Activated naive CD8-positive, alpha-beta T cell treated with anti-CD3 and anti-CD28 coated beads, Interleukin-2, amount 10 ng/mL, durations not matched to agents 7 days and 5 days (primary cell): ENCODE measurements at regions of chr18 and their contacts with region 1.

Region 1: DNA sequence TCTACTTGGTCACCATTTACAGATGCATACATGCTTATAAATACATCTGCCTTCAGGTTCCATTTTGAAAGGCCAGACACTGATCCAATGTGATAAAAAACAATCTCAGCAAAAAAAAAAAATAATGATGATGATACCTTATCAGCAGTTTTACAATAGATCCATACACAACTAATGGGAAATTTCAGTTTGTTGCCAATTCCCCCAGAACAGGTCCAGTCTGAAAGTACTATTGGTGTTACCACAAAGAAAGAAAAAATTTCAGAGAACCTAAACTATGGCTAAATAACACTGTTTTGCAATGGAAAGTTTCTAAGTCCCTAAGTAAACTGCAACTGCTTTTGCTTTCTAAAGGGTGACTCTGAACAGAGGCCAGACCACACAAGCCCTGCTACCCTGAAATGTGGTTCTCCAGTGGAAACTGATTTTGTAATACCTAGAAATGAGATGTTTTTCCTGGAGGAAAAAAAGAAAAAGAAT is 54.1 kb downstream of the LPIN2 start:
- DNase-seq: no peak
- ATAC-seq: peak; percentile 43
- H3K4me3 Mint-ChIP-seq: peak overlapping the region; percentile 83
- H3K27ac Mint-ChIP-seq: peak overlapping the region; percentile 99
- H3K4me1 Mint-ChIP-seq: peaks cover 76% of the 10 kb centered on the region
- H3K27me3 Mint-ChIP-seq: no peaks in the 10 kb centered on the region

Region 2: DNA sequence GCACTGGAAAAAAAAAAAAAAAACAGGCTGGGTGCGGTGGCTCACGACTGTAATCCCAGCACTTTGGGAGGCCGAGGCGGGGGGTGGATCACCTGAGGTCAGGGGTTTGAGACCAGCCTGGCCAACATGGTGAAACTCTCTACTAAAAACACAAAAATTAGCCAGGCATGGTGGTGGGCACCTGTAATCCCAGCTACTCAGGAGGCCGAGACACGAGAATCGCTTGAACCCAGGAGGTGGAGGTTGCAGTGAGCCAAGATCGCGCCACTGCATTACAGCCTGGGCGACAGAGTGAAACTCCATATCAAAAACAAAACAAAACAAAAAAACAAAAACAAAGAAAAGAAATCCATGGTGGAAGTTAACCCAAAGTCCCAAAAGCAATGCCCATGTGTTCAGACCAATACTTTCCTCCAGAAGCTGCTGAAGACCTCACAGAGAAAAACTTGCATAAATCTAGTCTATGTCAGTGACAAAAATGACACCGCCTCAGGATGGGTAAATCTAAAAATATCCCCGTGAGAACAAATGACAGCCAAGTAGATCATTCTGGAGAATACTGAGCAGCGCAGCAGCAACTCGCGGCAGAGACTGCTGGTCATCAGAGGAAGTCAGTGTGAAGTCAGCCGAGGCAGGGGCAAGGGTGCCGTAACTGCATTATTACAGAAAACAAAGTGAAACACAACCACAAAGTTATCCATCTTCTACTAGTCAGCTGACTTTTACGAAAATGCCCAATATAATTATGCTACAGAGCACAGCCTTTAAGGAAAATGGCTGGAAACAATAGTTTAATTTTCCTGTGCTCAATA is 13.1 kb after region 1 on chr18:
- POLR2A ChIA-PET with region 1: interaction called, 104 read pairs
- DNase-seq: peak; percentile 59
- ATAC-seq: peak; percentile 80
- H3K4me3 Mint-ChIP-seq: peak overlapping the region; percentile 91
- H3K27ac Mint-ChIP-seq: peak overlapping the region; percentile 95
- H3K4me1 Mint-ChIP-seq: peaks cover 77% of the 10 kb centered on the region
- H3K27me3 Mint-ChIP-seq: no peaks in the 10 kb centered on the region

Region 3: DNA sequence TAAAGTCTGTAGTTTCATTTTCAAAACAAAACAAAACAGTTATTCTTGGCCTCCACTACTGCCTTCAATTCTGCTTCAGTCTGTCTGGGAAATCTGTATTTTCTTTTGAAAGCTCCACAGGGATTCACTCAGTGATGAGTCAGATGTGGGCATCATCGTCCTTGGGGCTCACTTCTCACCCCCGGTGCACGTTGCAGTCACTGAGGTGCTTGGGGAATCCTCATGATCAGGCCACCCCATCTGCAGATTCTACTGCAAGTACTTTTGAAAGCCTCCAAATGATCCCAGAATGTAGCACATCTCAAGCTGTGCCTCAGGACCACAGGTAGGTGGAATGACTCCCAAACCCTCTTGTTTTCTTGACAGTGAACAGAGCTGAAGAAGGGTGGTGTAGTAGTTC is 19.8 kb after region 1 on chr18:
- POLR2A ChIA-PET with region 1: interaction called, 104 read pairs
- DNase-seq: no peak
- ATAC-seq: no peak
- H3K4me3 Mint-ChIP-seq: peak overlapping the region; percentile 89
- H3K27ac Mint-ChIP-seq: peak overlapping the region; percentile 94
- H3K4me1 Mint-ChIP-seq: peaks cover 65% of the 10 kb centered on the region
- H3K27me3 Mint-ChIP-seq: no peaks in the 10 kb centered on the region

Region 4: DNA sequence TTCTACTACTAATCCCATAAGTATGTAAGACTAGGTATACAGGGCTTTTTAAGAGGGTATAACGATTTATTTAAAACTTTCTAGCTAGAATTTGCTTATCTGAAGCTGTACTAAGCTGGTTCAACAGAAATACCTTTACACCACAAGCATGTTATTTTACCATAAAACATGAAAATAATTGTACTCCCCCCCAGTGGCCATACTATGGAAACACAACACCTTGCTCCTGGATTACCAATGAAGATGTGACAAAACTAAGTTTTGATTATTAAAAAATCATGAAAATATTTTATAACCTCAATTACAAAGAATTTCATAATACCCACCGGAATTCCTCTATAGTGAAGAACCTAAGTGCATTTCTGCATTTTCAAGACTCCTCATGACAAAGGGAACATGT is 26.8 kb after region 1 on chr18:
- POLR2A ChIA-PET with region 1: interaction called, 75 read pairs
- DNase-seq: no peak
- ATAC-seq: peak; percentile 35
- H3K4me3 Mint-ChIP-seq: no peak overlapping the region
- H3K27ac Mint-ChIP-seq: no peak overlapping the region
- H3K4me1 Mint-ChIP-seq: peaks cover 44% of the 10 kb centered on the region
- H3K27me3 Mint-ChIP-seq: no peaks in the 10 kb centered on the region